Heart right ventricle (tissue), 16 donors: ENCODE measurements at regions of chr17 and their contacts with region 1.

Region 1: DNA sequence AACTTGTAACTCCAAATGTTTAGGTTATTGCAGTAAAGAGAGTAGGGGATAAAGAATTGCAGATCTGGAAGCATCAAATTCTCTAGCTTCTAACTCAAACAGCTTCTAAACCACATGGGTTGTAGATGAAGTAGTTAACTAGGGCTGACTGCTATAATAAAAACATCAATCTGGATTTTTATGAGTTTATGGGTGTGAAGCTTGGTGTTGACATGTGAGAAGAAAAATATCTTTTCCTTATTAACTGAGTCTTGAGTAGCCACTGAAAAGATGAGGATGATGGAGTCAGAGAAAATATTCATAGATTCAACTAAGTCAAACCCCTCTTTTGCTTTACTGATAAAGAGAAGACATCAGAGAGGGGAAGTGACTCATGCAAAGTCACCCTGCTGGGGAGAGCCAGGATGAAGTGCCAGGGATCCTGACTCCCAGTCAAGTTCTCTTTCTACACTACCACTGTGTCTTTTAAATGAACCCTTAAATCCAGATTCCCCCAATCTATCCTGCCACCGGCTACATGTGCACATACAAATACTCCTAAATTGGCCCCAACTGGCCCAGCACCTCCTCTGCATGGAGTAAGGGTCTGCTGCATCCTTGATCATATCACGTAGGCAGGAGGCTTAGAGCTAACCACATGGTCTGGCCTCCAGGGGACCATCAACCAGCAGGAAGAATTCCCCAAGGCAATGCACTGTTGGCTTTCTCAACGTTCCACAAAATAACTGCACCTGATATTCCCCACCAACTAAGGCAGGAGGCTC is 264.0 kb upstream of the CCL2 start:
- DNase-seq: no peak
- ATAC-seq: no peak
- H3K4me3 ChIP-seq: no peak overlapping the region
- H3K27ac ChIP-seq: no peak overlapping the region
- H3K4me1 ChIP-seq: no peaks in the 10 kb centered on the region
- H3K27me3 ChIP-seq: peaks cover 0 to 4% (median 0%) of the 10 kb centered on the region in 7 donors
- CTCF ChIP-seq: no peak

Region 2: GRCh38 chr17:34051046-34051445 is 59.9 kb after region 1 on chr17:
- intact Hi-C with region 1: loop called in 1 of 10 experiments (anchors 10 kb)
- DNase-seq: no peak
- ATAC-seq: no peak
- H3K4me3 ChIP-seq: no peak overlapping the region
- H3K27ac ChIP-seq: no peak overlapping the region
- H3K4me1 ChIP-seq: no peaks in the 10 kb centered on the region
- H3K27me3 ChIP-seq: peaks cover 0 to 46% (median 19%) of the 10 kb centered on the region in 7 donors
- CTCF ChIP-seq: no peak